Activated naive CD4-positive, alpha-beta T cell treated with anti-CD3 and anti-CD28 coated beads, Interleukin-2, amount 10 ng/mL, durations not matched to agents 7 days and 5 days (primary cell): ENCODE measurements at regions of chr9 and their contacts with region 1.

Region 1: GRCh38 chr9:33374634-33375213 is 27.6 kb downstream of the AQP7 start:
- DNase-seq: peak; percentile 82
- H3K4me3 Mint-ChIP-seq: no peak overlapping the region
- H3K27ac Mint-ChIP-seq: no peak overlapping the region
- H3K4me1 Mint-ChIP-seq: peaks cover 18% of the 10 kb centered on the region
- H3K27me3 Mint-ChIP-seq: no peaks in the 10 kb centered on the region

Region 2: GRCh38 chr9:33081128-33081851 is 293.4 kb before region 1 on chr9:
- CTCF ChIA-PET with region 1: no interaction called
- DNase-seq: peak; percentile 82
- H3K4me3 Mint-ChIP-seq: no peak overlapping the region
- H3K27ac Mint-ChIP-seq: no peak overlapping the region
- H3K4me1 Mint-ChIP-seq: peaks cover 38% of the 10 kb centered on the region
- H3K27me3 Mint-ChIP-seq: peaks cover 7% of the 10 kb centered on the region

Region 3: GRCh38 chr9:33220681-33221567 is 153.8 kb before region 1 on chr9:
- CTCF ChIA-PET with region 1: no interaction called
- DNase-seq: no peak
- H3K4me3 Mint-ChIP-seq: no peak overlapping the region
- H3K27ac Mint-ChIP-seq: no peak overlapping the region
- H3K4me1 Mint-ChIP-seq: peaks cover 31% of the 10 kb centered on the region
- H3K27me3 Mint-ChIP-seq: peaks cover 37% of the 10 kb centered on the region

Region 4: GRCh38 chr9:33320568-33321261 is 54.0 kb before region 1 on chr9:
- CTCF ChIA-PET with region 1: interaction called, 11 read pairs
- DNase-seq: no peak
- H3K4me3 Mint-ChIP-seq: no peak overlapping the region
- H3K27ac Mint-ChIP-seq: no peak overlapping the region
- H3K4me1 Mint-ChIP-seq: no peaks in the 10 kb centered on the region
- H3K27me3 Mint-ChIP-seq: no peaks in the 10 kb centered on the region

Region 5: DNA sequence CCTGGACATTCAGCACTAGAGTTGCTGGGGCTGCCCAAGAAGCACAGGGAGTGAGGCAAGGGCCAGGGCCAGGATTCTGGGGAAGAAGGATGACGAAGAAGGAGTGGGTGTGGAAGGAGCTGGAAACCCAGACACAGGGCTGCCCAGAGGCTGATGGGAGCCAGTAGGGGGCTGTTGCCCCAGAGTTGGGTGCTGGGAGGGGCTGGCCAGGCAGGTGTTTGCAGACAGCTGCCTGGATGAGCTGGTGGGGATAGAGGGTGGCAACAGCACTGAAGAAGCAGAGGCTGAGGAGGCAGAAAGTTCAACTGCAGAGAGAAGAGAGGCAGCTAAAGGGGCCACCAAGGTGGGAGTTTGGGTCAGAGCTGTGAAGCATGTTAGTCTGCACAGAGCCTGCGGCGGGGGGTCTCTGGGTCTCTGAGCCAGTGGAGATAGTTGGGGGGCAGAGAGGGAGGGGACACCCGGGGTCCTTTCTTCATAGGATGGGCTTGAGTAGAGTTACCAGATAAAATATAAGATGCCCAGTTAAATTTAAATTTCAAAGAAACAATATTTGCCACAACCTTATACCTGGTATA is 30.2 kb after region 1 on chr9:
- CTCF ChIA-PET with region 1: interaction called, 21 read pairs
- DNase-seq: no peak
- H3K4me3 Mint-ChIP-seq: no peak overlapping the region
- H3K27ac Mint-ChIP-seq: no peak overlapping the region
- H3K4me1 Mint-ChIP-seq: peaks cover 23% of the 10 kb centered on the region
- H3K27me3 Mint-ChIP-seq: peaks cover 27% of the 10 kb centered on the region

Region 6: GRCh38 chr9:33446946-33447798 is 72.4 kb after region 1 on chr9 and contains the start of gene AQP3:
- CTCF ChIA-PET with region 1: interaction called, 26 read pairs
- DNase-seq: peak; percentile 91
- H3K4me3 Mint-ChIP-seq: peak within 1 kb of the TSS; percentile 91
- H3K27ac Mint-ChIP-seq: peak within 1 kb of the TSS; percentile 97
- H3K4me1 Mint-ChIP-seq: peaks cover 68% of the 10 kb centered on the region
- H3K27me3 Mint-ChIP-seq: no peaks in the 10 kb centered on the region

Region 7: GRCh38 chr9:33466565-33467495 is 92.1 kb after region 1 on chr9:
- CTCF ChIA-PET with region 1: interaction called, 99 read pairs
- DNase-seq: peak; percentile 84
- H3K4me3 Mint-ChIP-seq: no peak overlapping the region
- H3K27ac Mint-ChIP-seq: peak overlapping the region; percentile 42
- H3K4me1 Mint-ChIP-seq: peaks cover 9% of the 10 kb centered on the region
- H3K27me3 Mint-ChIP-seq: no peaks in the 10 kb centered on the region

Region 8: GRCh38 chr9:33614001-33614687 is 239.4 kb after region 1 on chr9:
- CTCF ChIA-PET with region 1: no interaction called
- DNase-seq: no peak
- H3K4me3 Mint-ChIP-seq: no peak overlapping the region
- H3K27ac Mint-ChIP-seq: no peak overlapping the region
- H3K4me1 Mint-ChIP-seq: no peaks in the 10 kb centered on the region
- H3K27me3 Mint-ChIP-seq: peaks cover 38% of the 10 kb centered on the region